ENCODE measurements at regions of chr17 and their contacts with region 1.

Region 1: GRCh38 chr17:7740481-7741001 is 23.0 kb downstream of the DNAH2 start:
- DNase-seq: peak in 1 of 10 donors; percentile 85

Region 2: GRCh38 chr17:7834962-7835813 is 94.6 kb after region 1 on chr17:
- intact Hi-C with region 1: loop called (anchors 5 kb)
- DNase-seq: peak; percentile 95 to 99 (median 97)

Region 3: DNA sequence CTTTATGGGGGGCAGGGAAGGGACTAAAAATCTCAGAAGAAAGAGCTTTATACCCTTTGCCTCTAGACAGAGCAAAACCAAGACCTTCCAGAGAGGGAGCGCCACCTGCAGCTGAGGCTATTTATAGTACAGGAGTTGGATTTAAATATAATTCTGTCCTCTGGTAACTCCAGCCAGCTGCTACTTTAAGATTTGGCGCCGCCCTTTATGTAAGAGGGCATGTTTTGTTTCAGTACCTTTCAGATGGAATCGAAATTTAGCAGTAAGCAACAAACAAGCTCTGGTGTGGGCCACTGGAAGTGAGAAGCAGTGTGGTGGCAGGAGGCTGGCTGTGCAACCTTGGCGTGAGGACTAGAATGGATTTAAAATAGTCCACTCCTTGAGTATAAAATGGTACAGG is 256.6 kb after region 1 on chr17:
- intact Hi-C with region 1: loop called (anchors 5 kb)
- DNase-seq: no peak

Measured in posterior cingulate gyrus (tissue), 11 donors.